GM13976 (cell line): ENCODE measurements at regions of chr12 and their contacts with region 1.

Region 1: DNA sequence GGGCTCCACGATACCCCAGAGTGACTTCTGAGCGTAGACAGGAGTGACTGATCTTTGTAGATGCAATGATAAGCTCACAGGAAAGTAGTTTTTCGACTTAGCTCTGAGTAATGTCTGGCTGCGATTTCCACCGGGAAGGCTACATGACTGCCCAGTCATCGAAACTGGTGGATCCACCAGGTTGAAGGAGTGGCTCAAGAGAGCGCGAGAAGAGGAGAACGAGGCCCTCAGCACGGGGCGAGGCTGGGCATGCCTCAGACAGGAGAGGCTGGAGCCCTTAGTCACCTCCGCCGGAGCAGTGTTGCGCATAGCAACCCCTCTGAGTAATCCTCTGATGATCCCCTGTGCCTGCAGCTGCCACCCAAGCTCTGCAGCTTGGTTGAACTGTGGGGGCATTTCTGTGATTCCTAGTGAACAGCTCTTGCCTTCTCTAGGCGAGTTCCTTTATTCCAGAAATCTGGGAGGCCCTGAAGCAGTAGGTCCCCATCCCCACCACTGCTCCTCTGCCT is 25.6 kb downstream of the ELK3 start:
- DNase-seq: no peak
- CTCF ChIP-seq: no peak

Region 2: DNA sequence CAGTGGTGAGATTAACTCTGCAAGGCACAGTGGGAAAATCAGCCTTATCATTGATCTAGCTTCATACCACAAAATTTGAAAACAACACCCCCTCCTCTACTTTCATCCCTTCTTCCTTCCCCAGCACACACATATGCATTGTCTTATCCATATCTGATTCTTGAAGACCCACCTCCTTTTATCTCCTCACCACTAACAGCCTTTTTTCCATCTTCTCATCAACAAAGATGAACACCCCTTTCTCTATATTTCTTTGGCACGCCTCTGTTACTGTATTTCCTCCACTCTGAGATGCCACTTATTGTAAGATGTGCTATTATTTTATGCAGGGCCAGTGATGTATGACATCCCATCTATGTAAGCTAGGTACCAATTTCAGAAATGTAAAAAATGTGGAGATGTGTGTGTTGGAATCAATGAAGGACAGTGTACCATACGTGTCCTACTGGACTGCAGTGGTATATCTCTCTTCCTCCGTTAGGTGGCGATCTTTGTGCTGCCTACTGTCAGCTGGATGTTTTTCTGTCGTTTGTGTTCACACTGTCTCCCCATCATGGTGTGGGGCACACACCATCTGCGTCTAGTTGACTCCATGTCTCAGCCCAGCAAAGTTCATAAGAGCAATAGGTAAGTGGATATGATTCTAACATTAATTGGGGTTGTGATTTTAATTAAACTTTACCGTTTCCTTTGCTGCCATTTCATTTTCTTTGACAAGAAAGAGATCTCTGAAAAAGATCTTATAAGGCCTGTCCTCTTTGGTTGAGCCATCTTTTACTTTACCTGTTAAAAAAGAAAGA is 301.4 kb before region 1 on chr12:
- in situ Hi-C with region 1: loop called (anchors 25 kb)
- DNase-seq: peak; percentile 55
- CTCF ChIP-seq: peak; percentile 69